Dorsolateral prefrontal cortex (tissue), 120 donors: ENCODE measurements at regions of chr1 and their contacts with region 1.

Region 1: DNA sequence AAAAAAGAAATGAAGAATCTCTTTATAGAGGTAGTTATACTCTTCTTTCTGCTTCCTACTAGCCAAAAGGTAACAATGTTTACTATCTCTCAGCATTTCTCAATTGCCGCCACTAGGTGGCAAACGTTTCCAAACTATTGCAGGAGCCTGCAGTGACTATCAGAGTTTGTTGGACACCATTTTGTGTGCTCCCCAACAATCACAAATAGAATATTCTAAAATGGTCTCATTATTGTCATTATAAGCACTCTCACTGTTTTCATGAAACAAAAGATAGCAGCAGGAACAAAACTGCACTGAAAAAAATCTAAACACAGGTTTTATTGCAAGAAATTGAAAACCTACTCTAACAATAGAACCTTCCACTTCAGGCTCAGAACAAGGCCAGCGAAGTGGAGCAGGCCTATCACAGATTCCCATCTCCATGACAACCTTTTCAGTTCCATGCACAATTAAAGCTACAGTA is 83.9 kb upstream of the PLPPR4 start:
- DNase-seq: peak in 9 of 10 donors; percentile 52 to 91 (median 70)
- H3K4me3 ChIP-seq: peak overlapping the region in 14 of 59 donors; percentile 2 to 36 (median 14)
- H3K27ac ChIP-seq: peak overlapping the region in 50 of 59 donors; percentile 17 to 78 (median 66)
- H3K27me3 ChIP-seq: no peaks in the 10 kb centered on the region
- CTCF ChIP-seq: peak; percentile 83 to 99 (median 92)

Region 2: DNA sequence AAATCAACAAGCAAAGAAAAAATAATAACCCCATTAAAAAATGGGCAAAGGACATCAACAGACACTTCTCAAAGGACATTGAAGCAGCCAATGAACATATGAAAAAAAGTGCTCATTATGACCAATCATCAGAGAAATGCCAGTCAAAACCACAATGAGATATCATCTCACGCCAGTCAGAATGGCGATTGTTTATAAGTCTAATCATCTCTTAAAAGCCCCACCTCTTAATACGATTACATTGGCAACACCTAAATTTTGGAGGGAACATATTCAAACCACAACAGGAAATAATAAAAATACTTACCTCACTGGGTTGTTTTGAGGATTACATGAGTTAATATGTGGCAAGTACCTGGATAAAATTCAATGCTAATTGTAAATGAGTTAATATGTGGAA is 26.8 kb after region 1 on chr1:
- intact Hi-C with region 1: no loop called
- DNase-seq: no peak
- H3K4me3 ChIP-seq: no peak overlapping the region
- H3K27ac ChIP-seq: no peak overlapping the region
- H3K27me3 ChIP-seq: no peaks in the 10 kb centered on the region
- CTCF ChIP-seq: no peak

Region 3: DNA sequence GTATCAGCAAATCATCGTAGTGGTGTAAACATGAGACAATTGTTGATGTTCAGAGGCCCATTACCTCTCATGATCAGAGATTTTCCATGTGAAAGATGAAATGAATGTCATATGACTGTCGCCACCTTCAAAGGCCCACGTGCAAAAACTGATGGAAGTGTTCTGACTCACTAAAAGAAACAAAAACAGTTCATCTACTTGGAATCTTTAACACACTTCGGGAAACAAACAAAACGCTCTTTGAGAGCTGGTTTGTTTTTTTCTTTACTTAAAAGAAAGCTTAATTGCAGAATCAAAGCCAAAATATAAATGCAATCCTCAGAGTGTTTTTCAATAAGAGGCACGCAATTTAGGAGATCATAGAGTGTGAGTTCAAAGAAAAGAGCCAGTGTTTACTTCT is 184.8 kb after region 1 on chr1:
- intact Hi-C with region 1: no loop called
- DNase-seq: no peak
- H3K4me3 ChIP-seq: no peak overlapping the region
- H3K27ac ChIP-seq: no peak overlapping the region
- H3K27me3 ChIP-seq: peaks cover 0 to 3% (median 0%) of the 10 kb centered on the region in 45 donors
- CTCF ChIP-seq: no peak

Region 4: GRCh38 chr1:99476058-99476457 is 295.7 kb after region 1 on chr1:
- intact Hi-C with region 1: loop called (anchors 2 to 5 kb)
- DNase-seq: no peak
- H3K4me3 ChIP-seq: no peak overlapping the region
- H3K27ac ChIP-seq: no peak overlapping the region
- H3K27me3 ChIP-seq: no peaks in the 10 kb centered on the region
- CTCF ChIP-seq: no peak

Region 5: GRCh38 chr1:99481391-99481996 is 301.1 kb after region 1 on chr1:
- intact Hi-C with region 1: loop called (anchors 2 to 5 kb)
- DNase-seq: peak in 3 of 10 donors; percentile 11 to 53 (median 33)
- H3K4me3 ChIP-seq: no peak overlapping the region
- H3K27ac ChIP-seq: peak overlapping the region in 3 of 59 donors; percentile 5 to 17 (median 13)
- H3K27me3 ChIP-seq: peaks cover 0 to 5% (median 0%) of the 10 kb centered on the region in 45 donors
- CTCF ChIP-seq: peak; percentile 73 to 96 (median 88)

Region 6: GRCh38 chr1:99707535-99708142 is 527.3 kb after region 1 on chr1:
- intact Hi-C with region 1: loop called (anchors 2 to 10 kb)
- DNase-seq: peak in 9 of 10 donors; percentile 26 to 90 (median 65)
- H3K4me3 ChIP-seq: no peak overlapping the region
- H3K27ac ChIP-seq: no peak overlapping the region
- H3K27me3 ChIP-seq: no peaks in the 10 kb centered on the region
- CTCF ChIP-seq: peak; percentile 76 to 98 (median 89)

Region 7: DNA sequence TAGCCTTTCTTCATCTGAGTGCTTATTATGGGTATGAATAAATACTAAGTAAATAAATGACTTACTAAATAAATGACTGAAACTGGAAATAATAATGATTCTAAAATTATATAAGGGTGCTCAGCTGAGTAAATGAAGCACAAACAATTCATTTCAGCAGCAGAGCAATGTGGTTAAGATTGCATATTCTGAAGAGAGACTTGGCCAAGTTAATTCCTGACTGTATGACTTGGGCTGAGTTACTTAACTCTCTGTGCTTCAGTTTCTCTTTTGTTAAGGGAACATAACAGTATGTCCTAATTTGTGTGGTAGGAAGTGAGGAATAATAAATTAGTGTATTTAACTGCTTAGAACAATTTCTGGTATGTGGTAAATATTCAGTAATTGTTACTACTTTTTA is 688.9 kb after region 1 on chr1:
- intact Hi-C with region 1: no loop called
- DNase-seq: no peak
- H3K4me3 ChIP-seq: no peak overlapping the region
- H3K27ac ChIP-seq: no peak overlapping the region
- H3K27me3 ChIP-seq: no peaks in the 10 kb centered on the region
- CTCF ChIP-seq: no peak